KBM-7 (cell line): ENCODE measurements at regions of chr3 and their contacts with region 1.

Region 1: GRCh38 chr3:184380191-184380626 is 355 bp downstream of the CHRD start:
- DNase-seq: no peak

Region 2: GRCh38 chr3:184002469-184002868 is 377.7 kb before region 1 on chr3:
- in situ Hi-C with region 1: no loop called
- DNase-seq: no peak

Region 3: GRCh38 chr3:184543843-184544512 is 163.8 kb after region 1 on chr3:
- in situ Hi-C with region 1: loop called (anchors 25 kb)
- DNase-seq: peak; percentile 91